Left ventricle myocardium superior (tissue), 1 donor: ENCODE measurements at regions of chr1 and their contacts with region 1.

Region 1: DNA sequence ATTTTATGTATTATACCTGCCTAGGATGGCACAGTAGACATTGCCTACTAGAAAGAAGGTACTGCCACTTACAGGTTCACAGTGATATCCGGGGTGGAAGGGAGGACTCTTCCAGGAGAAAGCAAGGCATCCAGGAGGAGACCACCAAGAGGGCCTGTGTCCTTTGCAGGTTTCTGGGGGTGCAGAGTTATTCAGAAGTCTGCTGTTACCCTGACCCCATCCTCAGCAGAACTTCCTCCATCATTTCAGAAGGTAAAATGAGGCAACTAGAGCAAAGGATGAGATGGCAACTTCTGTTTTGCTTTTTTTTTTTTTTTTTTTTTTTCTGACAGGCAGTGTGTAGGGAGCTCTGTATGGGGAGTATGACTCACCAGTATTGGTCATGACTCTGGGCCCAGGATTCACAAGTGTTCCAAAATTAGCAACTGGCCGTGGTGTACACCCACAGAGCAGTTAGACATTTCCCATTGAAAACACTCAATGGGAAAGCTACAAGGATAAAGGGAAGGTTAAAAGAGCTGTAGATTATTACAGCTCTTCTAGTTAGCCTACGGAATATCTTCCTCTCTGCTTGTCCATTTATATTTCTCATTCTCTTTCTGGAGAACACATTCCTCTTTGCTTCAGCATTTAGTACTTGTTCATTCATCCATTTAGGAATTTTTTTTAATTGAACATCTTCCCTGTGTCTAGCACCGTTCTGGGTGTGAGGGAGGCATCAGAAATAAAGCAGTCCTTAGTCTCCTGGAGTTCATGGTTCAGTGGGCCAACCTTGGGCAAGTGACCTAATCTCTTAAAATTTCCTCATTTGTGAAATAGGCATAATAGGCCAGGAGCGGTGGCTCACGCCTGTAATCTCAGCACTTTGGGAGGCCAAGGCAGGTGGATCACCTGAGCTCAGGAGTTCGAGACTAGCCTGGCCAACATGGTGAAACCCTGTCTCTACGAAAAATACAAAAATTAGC is 50.5 kb upstream of the PPP2R5A start:
- DNase-seq: peak; percentile 37
- ATAC-seq: peak; percentile 95

Region 2: DNA sequence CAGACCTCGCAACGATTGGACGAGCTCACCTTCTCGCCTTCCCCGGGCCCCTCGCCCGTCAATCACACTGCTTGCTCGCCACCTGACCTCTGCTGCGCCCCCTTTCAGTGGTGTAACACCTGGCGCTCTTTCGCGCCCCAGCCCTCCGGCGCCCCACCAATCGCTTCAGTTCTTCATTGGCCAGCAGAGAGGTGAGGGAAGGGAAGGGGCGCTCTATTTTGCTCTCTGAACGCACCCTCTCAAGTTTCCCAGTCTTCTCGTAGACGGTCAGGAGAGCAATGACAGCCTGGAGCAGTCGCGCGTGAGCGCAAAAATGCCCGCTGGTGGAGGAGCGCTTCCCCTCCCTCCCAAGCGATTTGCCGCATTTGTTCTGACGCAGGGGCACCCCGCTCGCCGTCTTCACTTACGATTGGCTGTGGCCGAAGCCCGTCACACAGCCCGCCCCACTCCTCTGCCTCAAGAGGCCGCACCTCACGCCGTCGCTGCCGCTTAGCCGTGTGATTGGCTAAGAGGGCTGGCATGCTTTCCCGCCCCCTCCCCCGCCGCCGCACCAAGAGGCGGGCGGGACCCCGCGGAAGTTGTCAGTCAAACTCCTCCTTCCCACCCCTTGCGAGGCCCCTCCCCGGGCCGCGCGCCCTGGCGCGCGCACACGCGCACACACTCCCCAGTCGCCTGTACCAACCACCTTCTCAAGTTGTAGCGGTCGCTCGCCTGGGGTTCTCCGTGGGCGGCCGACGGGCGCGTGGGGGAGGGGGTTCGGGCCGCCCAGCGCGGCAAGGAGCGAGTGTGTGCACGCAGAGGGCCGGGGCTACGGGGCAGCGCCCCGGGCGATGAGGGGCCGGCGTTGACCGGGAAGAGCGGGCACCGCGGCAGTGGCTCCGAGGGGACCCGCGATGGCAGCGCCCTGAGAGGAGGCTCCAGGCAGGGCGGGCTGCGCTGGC is 50.3 kb after region 1 on chr1 and contains the start of gene PPP2R5A:
- intact Hi-C with region 1: loop called (anchors 10 kb)
- DNase-seq: peak; percentile 100
- ATAC-seq: peak; percentile 95
- total RNA-seq, gene PPP2R5A: 80.7 TPM